ENCODE measurements at regions of chr11 and their contacts with region 1.

Region 1: GRCh38 chr11:119196833-119197483 is 9.2 kb upstream of the CBL start:
- DNase-seq: peak; percentile 89 to 95 (median 92)
- H3K4me3 ChIP-seq: no peak overlapping the region
- H3K27ac ChIP-seq: no peak overlapping the region
- H3K4me1 ChIP-seq: peaks cover 0 to 4% (median 3%) of the 10 kb centered on the region in 4 experiments
- H3K27me3 ChIP-seq: no peaks in the 10 kb centered on the region

Region 2: GRCh38 chr11:119030329-119031049 is 166.5 kb before region 1 on chr11 and contains the start of gene SLC37A4:
- CTCF ChIA-PET with region 1: no interaction called
- POLR2A ChIA-PET with region 1: no interaction called
- DNase-seq: peak; percentile 98 to 99 (median 99)
- H3K4me3 ChIP-seq: peak within 1 kb of the TSS; percentile 49 to 88 (median 83)
- H3K27ac ChIP-seq: peak within 1 kb of the TSS in 1 of 2 experiments; percentile 73
- H3K4me1 ChIP-seq: peaks cover 0 to 22% (median 21%) of the 10 kb centered on the region in 4 experiments
- H3K27me3 ChIP-seq: no peaks in the 10 kb centered on the region

Region 3: GRCh38 chr11:119106564-119107537 is 90.1 kb before region 1 on chr11 and contains the start of gene C2CD2L:
- CTCF ChIA-PET with region 1: interaction called, 12 read pairs
- POLR2A ChIA-PET with region 1: no interaction called
- DNase-seq: peak; percentile 85 to 89 (median 85)
- H3K4me3 ChIP-seq: peak within 1 kb of the TSS; percentile 70 to 90 (median 79)
- H3K27ac ChIP-seq: peak within 1 kb of the TSS in 1 of 2 experiments; percentile 71
- H3K4me1 ChIP-seq: peaks cover 13 to 42% (median 32%) of the 10 kb centered on the region in 4 experiments
- H3K27me3 ChIP-seq: no peaks in the 10 kb centered on the region

Region 4: DNA sequence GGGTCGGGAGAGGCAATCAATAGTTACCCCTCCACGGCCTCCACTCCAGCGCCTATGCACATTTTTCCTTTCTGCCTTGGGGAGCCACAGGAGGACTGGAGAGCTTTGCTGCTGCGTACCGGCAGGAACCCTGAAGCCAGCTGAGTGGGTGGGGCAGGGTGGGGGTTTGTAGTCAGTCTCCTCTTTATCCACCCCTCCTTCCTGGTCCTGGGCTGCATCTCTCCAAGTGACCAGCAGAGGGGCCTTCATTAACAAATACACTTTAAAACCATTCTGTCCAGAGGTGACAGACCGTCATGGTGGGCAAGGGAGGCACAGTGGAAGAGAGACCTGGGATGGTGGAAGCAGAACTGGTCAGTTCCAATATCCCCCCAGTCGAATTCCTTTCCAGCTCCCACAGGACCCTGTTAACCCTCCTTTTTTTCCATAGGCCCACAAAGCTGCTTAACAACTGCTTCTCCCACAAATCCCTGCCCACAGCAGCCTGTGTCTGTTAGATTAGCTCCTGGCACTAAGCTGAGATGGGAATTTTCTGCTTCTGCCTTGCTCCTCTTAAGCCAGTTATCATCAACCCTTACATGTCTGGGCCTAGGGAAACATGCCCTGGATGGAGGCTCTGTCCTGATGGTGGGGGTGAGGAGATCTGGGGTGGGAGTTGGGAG is 52.0 kb before region 1 on chr11:
- CTCF ChIA-PET with region 1: interaction called, 29 read pairs
- POLR2A ChIA-PET with region 1: no interaction called
- DNase-seq: peak; percentile 71 to 86 (median 84)
- H3K4me3 ChIP-seq: no peak overlapping the region
- H3K27ac ChIP-seq: no peak overlapping the region
- H3K4me1 ChIP-seq: peaks cover 0 to 18% (median 16%) of the 10 kb centered on the region in 4 experiments
- H3K27me3 ChIP-seq: peaks cover 0 to 38% (median 19%) of the 10 kb centered on the region in 5 experiments

Region 5: GRCh38 chr11:119155733-119156492 is 41.0 kb before region 1 on chr11:
- CTCF ChIA-PET with region 1: interaction called, 11 read pairs
- POLR2A ChIA-PET with region 1: no interaction called
- DNase-seq: peak in 2 of 3 donors; percentile 26 to 36
- H3K4me3 ChIP-seq: no peak overlapping the region
- H3K27ac ChIP-seq: no peak overlapping the region
- H3K4me1 ChIP-seq: no peaks in the 10 kb centered on the region
- H3K27me3 ChIP-seq: peaks cover 0 to 13% (median 5%) of the 10 kb centered on the region in 5 experiments

Region 6: DNA sequence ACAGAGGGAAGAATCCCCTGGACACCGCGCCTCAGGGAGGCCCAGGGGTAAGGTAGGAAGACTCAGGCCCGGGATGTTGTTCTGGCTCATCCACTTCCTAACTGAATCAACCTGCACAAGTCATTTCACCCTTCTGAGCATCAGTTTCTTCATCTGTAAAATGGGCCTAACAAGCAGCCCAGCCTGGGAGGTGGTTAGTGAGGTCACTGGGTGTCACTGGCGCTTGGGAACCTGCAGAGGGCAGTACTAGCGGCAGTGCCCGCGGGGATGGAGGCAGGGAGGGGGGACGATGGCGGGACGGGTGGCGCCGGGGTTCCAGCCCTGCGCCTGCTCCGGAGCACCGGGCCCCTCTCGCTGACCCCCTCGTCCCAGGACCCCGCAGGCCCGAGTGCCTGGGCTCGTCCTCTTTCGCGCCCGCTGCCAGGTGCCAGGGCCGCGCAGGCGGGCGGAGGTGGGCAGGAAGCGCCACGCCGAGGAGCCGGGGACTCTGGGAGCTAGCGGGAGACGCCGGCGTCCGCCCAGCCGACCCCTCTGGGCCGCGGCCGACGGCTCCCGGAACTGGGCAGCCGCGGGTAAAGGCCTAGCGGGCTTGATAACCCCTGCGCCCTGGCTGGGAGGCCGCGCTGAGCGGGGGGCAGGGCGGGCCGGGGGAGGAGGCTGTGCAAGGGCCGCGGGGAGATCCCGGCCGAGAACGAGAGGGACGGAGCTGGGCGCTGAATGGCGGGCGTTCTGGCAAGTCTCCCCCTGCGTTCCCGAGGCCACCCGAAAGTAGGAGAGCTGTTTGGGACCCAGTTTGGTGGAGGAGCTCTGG is 28.3 kb before region 1 on chr11 and contains the start of gene NLRX1:
- CTCF ChIA-PET with region 1: interaction called, 25 read pairs
- POLR2A ChIA-PET with region 1: no interaction called
- DNase-seq: peak; percentile 82 to 93 (median 92)
- H3K4me3 ChIP-seq: peak within 1 kb of the TSS; percentile 68 to 87 (median 79)
- H3K27ac ChIP-seq: peak within 1 kb of the TSS; percentile 40 to 66
- H3K4me1 ChIP-seq: peaks cover 0 to 23% (median 10%) of the 10 kb centered on the region in 4 experiments
- H3K27me3 ChIP-seq: no peaks in the 10 kb centered on the region

Region 7: GRCh38 chr11:119181677-119182412 is 15.1 kb before region 1 on chr11:
- CTCF ChIA-PET with region 1: interaction called, 10 read pairs
- POLR2A ChIA-PET with region 1: no interaction called
- DNase-seq: no peak
- H3K4me3 ChIP-seq: no peak overlapping the region
- H3K27ac ChIP-seq: no peak overlapping the region
- H3K4me1 ChIP-seq: peaks cover 4 to 12% (median 11%) of the 10 kb centered on the region in 4 experiments
- H3K27me3 ChIP-seq: no peaks in the 10 kb centered on the region

Region 8: GRCh38 chr11:119323538-119324033 is 126.6 kb after region 1 on chr11:
- CTCF ChIA-PET with region 1: interaction called, 10 read pairs
- POLR2A ChIA-PET with region 1: no interaction called
- DNase-seq: peak; percentile 60 to 78 (median 72)
- H3K4me3 ChIP-seq: no peak overlapping the region
- H3K27ac ChIP-seq: no peak overlapping the region
- H3K4me1 ChIP-seq: peaks cover 0 to 19% (median 17%) of the 10 kb centered on the region in 4 experiments
- H3K27me3 ChIP-seq: peaks cover 0 to 21% (median 8%) of the 10 kb centered on the region in 5 experiments